Activated T-helper 2 cell treated with anti-CD3 and anti-CD28 coated beads, Interferon-gamma antibody, Interleukin-2, Interleukin-4, amounts not matched to agents 10 μg/mL and 5 μg/mL and 100 μg/mL, durations not matched to agents 14 hours and 24 hours and 36 hours (primary cell): ENCODE measurements at regions of chr5 and their contacts with region 1.

Region 1: DNA sequence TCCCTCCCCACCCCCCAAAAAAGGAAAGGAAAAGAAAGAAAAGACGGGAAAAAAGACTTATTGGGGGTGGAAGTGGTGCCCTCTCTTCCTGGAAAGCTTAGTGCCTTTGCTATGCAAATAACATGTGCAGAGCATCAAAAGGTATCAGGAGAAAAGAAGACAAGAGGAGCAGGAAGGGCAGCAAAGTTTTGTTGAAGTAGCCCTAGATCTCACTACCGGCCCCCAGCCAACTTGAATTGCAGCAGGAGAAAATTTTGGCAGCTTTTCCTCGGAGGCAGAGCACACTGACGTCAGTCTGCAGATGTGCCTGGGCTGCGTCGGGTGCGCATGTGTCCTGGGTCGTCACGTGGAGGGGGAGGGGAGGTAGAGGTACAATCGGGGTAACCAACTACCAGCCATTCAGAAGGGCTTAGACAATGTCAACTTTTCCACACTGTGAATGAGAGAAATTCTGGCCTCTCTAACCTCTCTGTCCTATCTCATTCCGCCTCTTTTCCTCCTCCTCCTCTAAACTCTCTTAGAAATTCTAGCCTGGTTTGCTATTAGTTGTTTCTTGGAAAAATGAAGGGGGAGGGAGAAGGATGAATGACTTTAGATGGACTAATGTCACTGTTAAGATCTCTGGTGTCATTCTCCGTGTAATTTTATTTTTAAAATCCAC is at the start of gene ADAMTS6:
- DNase-seq: peak; percentile 69
- H3K4me3 Mint-ChIP-seq: no peak within 1 kb of the TSS
- H3K27ac Mint-ChIP-seq: peak within 1 kb of the TSS; percentile 84
- H3K4me1 Mint-ChIP-seq: peaks cover 21% of the 10 kb centered on the region
- H3K27me3 Mint-ChIP-seq: peaks cover 6% of the 10 kb centered on the region
- total RNA-seq, gene ADAMTS6: 1.4 and 1.7 TPM in 2 replicates

Region 2: DNA sequence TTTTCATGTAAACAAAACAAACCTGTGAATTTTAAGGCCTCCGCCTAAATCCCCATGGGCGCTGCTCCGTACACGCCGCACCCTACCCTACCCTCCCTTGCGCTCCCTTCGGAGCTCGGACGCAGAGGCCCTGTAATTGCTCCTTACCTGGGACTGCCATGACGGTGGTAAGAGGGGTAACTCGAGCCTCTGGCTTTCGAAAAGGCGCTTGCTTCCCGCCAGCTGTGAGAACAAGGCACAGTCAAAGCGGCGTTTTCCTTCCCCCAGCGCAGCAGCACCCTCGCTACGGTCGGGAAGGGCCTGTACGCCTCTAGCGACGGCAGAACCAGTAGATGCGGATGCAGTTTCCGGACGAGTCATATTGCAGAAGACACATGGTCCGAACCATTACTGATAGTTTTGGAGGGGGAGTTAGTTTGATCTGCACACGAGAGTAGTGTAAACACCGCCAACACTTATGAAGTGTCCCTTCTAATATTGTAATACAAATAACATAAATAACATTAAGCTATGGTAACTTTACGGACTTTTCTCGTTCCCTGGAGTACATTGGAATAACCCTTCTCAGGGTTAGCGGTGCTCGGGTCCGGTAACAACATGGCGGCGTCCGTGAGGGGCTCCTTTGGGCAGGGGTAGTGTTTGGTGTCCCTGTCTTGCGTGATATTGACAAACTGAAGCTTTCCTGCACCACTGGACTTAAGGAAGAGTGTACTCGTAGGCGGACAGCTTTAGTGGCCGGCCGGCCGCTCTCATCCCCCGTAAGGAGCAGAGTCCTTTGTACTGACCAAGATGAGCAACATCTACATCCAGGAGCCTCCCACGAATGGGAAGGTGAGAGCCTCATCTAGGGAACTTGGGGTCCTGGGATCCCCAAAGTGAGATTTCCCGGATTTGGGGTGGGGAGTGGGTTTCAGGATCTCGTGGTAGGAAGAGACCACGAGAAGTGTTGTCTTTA is 713.1 kb before region 1 on chr5 and contains the starts of genes CWC27 and SREK1IP1:
- intact Hi-C with region 1: loop called (anchors 5 kb)
- DNase-seq: peak; percentile 79
- H3K4me3 Mint-ChIP-seq: peak within 1 kb of the TSS; percentile 98
- H3K27ac Mint-ChIP-seq: peak within 1 kb of the TSS; percentile 96
- H3K4me1 Mint-ChIP-seq: peaks cover 47% of the 10 kb centered on the region
- H3K27me3 Mint-ChIP-seq: no peaks in the 10 kb centered on the region
- total RNA-seq, gene CWC27: 30.3 and 32.9 TPM in 2 replicates
- total RNA-seq, gene SREK1IP1: 30.9 and 32.9 TPM in 2 replicates

Region 3: DNA sequence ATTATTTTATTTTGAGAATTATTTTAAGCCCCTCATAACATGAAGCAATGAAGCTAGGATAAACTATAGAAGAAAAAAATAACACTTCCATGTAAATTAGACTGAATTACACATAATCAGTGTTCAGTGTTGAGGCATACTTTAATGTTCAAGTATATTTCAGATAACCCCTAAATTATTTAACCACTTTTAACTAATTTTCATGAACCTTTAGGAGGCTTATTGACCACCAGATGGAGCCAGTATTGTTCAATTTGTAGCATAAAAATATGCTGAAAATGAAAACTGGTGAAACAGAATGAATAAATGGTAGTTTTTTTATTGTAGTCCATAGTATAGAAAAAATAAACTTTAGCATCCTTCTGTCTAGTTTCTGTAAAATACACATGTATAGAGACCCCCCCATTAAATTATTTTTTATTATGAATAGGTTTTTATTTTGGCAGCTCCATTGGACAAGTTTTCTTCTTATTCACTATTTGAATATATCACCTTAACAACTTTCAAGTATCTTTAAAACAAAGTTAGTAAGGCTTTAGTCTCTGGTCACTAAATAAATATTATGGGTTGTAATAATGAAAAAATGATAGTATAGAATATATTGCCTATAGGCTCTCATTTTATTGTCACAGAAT is 522.9 kb before region 1 on chr5:
- intact Hi-C with region 1: loop called (anchors 1 kb)
- DNase-seq: no peak
- H3K4me3 Mint-ChIP-seq: no peak overlapping the region
- H3K27ac Mint-ChIP-seq: no peak overlapping the region
- H3K4me1 Mint-ChIP-seq: no peaks in the 10 kb centered on the region
- H3K27me3 Mint-ChIP-seq: no peaks in the 10 kb centered on the region

Region 4: DNA sequence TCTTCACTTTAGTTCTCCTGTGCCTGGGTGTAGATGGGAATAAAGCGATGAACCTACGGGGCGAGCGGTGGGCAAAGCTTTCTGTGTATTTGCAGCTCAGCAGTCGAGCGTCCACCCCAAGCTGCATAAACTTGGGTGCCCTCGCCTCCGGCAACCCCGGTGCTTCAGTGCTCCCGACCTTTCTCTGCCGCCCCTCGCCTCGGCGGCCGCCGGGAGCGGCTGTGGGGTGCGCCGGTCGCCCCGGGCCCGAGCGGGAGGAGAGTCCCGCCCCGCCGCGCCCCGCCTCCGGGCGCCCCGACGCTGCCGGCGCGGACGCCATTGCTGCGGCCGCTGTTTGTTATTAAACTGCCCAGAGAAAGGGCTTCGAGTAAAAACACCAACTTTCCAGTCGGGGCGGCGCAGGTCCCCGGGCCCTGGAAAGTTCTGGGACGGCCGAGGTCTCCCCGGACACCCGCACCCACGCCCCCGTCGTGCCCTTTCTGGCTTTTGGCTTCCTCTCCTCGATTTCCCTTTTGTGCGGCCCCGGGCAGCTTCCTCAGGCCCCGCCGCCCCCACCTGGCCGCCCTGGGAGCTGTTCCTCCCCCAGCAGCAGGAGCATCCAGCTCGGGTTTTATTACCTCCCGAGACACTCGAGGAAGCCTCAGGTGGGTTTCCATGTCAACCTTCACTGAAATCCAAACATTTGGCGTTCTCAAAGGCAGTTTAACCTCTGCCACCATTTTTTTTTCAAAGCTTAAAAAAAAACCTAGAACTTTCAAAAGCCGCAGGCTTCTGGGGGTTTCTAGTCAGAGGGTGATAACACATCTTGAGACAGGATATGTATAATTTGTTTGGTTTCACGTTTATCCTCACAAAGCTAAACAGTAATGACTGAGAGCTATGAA is 378.7 kb before region 1 on chr5:
- intact Hi-C with region 1: loop called (anchors 2 kb)
- DNase-seq: peak; percentile 21
- H3K4me3 Mint-ChIP-seq: peak overlapping the region; percentile 80
- H3K27ac Mint-ChIP-seq: peak overlapping the region; percentile 73
- H3K4me1 Mint-ChIP-seq: peaks cover 35% of the 10 kb centered on the region
- H3K27me3 Mint-ChIP-seq: peaks cover 21% of the 10 kb centered on the region

Region 5: DNA sequence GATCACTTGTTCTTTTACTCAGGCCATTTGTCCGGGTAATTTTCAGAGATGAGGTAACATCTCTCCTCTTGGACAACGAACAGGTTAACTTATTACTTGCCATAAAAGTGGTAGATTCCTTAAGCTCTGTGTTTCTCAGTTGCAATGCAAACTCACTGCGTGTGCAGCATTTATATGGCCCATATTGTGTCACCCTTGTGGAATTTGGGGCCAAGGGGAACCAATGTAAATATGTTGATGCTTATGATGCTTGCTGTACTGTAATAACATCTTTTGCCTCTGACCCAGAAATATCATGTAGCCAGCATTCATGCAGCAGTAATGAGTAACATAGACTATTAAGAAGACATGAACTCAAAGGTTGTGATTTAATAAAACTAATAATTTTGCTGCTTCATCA is 175.9 kb before region 1 on chr5:
- intact Hi-C with region 1: no loop called
- DNase-seq: no peak
- H3K4me3 Mint-ChIP-seq: no peak overlapping the region
- H3K27ac Mint-ChIP-seq: no peak overlapping the region
- H3K4me1 Mint-ChIP-seq: no peaks in the 10 kb centered on the region
- H3K27me3 Mint-ChIP-seq: no peaks in the 10 kb centered on the region

Region 6: DNA sequence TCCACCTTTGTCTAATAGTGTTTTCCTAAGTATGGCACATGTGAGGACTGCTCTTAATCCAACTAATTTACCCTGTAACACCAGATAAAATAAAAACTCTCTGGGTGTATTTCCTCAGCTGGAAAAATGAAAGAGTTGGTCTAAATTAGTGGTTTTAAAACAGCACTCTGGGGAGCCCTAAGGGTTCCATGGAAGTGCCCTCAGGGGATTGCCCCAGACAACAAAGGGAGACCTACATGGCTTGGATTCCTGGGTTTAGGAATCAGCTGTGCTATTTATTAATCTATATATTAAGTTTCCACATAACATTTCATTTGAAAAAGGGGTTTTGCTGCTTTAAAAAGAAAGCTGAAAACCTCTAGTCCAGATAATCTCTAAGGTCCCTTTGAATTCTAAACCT is 20.3 kb before region 1 on chr5:
- intact Hi-C with region 1: no loop called
- DNase-seq: no peak
- H3K4me3 Mint-ChIP-seq: no peak overlapping the region
- H3K27ac Mint-ChIP-seq: no peak overlapping the region
- H3K4me1 Mint-ChIP-seq: no peaks in the 10 kb centered on the region
- H3K27me3 Mint-ChIP-seq: no peaks in the 10 kb centered on the region

Region 7: DNA sequence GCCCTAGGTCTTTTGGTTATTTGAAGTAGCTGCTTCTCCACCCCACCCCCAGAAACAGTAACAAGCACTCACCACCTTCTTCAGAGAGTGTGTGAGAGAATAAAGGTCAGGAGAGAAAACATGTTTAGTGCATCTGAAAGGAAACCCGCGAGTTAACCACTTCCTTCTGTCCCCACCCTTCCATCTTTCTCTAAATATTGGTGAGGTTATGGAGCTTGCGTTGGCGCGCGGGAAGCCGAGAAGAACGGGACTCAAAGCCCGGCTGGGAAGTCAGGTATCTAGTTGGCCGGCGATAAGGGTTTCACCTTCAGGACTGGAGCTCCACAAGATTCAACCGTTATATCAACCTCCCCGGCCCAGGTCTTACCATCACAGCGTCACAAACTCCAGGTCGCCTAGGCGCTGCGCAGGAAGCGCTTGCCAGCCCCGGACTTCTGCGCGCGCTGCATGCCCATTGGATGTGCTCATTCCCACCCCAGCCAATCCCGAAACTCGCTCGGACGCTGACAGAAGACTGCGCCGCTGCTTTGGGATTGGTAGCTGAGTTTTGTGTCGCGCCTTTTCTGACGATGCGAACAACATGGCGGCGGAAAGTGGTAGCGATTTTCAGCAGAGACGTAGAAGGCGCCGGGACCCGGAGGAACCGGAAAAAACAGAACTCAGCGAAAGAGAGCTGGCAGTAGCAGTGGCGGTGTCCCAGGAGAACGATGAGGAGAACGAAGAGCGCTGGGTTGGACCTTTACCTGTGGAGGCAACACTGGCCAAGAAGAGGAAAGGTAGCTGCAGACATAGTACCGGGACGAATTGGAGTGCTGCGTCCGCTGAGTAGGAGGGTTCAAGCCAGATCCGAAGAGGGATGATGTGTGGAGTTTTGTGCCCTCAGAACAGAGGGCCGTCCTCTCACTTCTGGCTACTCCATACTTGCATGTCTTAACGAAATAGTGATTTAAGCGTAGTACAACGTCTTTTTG is 81.3 kb after region 1 on chr5 and contains the starts of genes CENPK and PPWD1:
- intact Hi-C with region 1: loop called (anchors 5 kb)
- DNase-seq: peak; percentile 95
- H3K4me3 Mint-ChIP-seq: peak within 1 kb of the TSS; percentile 91
- H3K27ac Mint-ChIP-seq: peak within 1 kb of the TSS; percentile 97
- H3K4me1 Mint-ChIP-seq: peaks cover 48% of the 10 kb centered on the region
- H3K27me3 Mint-ChIP-seq: no peaks in the 10 kb centered on the region
- total RNA-seq, gene CENPK: 78.0 and 79.2 TPM in 2 replicates
- total RNA-seq, gene PPWD1: 51.9 and 53.8 TPM in 2 replicates